Activated CD4-positive, alpha-beta T cell treated with anti-CD3 and anti-CD28 coated beads, Interleukin-2, amount 10 ng/mL, durations not matched to agents 24 days and 14 days (primary cell): ENCODE measurements at regions of chr3 and their contacts with region 1.

Region 1: GRCh38 chr3:157159762-157160657 is at the start of gene CCNL1:
- DNase-seq: peak; percentile 99
- H3K4me3 Mint-ChIP-seq: peak within 1 kb of the TSS; percentile 94
- H3K27ac Mint-ChIP-seq: peak within 1 kb of the TSS; percentile 99
- H3K4me1 Mint-ChIP-seq: peaks cover 44% of the 10 kb centered on the region
- H3K27me3 Mint-ChIP-seq: no peaks in the 10 kb centered on the region
- total RNA-seq, gene CCNL1: 171 and 172 TPM in 2 replicates

Region 2: GRCh38 chr3:155854141-155854940 is 1305.7 kb before region 1 on chr3 and contains the start of gene SLC33A1:
- intact Hi-C with region 1: loop called (anchors 5 kb)
- DNase-seq: peak; percentile 99
- H3K4me3 Mint-ChIP-seq: peak within 1 kb of the TSS; percentile 97
- H3K27ac Mint-ChIP-seq: peak within 1 kb of the TSS; percentile 98
- H3K4me1 Mint-ChIP-seq: peaks cover 31% of the 10 kb centered on the region
- H3K27me3 Mint-ChIP-seq: peaks cover 2% of the 10 kb centered on the region
- total RNA-seq, gene SLC33A1: 27.4 and 28.0 TPM in 2 replicates

Region 3: DNA sequence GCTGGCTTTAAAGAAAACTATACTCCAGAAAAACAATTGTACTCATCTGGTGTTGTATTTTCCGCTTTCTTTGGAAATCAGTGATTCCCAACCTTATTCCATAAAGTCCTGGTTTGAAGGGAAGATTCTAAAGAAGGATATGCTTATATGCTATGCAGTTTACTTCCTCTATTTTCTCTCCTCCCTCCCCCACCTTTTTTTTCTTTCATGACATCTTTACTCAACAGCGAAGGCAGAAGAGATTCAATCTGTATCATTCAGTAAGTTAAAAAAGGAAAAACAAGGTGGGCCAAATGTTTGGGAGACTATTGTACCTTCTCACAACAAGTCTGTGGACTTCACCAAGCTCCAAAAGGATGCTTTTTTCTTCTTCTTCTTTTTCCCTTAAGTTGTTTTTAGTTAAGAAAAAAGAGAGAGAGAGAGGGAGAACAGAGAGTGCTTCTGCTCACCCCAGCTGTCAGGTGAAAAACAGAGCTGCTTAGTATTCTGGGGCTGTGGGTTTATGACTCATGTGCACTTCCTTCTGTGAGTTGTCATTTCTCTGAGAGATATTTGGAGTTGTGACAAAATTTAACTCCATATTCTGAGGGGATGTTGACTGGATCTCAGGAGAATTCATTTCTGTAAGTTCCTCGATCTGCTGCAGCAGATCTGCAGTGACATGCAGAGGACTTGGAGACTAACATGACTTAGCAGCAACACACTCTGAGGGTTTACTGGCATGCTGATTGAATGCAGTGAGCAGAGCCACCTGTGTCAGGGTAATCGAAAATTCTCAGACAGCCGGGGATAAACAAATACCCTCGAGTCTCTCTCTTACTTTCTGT is 675.8 kb before region 1 on chr3:
- intact Hi-C with region 1: loop called (anchors 5 kb)
- DNase-seq: peak; percentile 87
- H3K4me3 Mint-ChIP-seq: peak overlapping the region; percentile 81
- H3K27ac Mint-ChIP-seq: peak overlapping the region; percentile 87
- H3K4me1 Mint-ChIP-seq: peaks cover 32% of the 10 kb centered on the region
- H3K27me3 Mint-ChIP-seq: peaks cover 8% of the 10 kb centered on the region

Region 4: DNA sequence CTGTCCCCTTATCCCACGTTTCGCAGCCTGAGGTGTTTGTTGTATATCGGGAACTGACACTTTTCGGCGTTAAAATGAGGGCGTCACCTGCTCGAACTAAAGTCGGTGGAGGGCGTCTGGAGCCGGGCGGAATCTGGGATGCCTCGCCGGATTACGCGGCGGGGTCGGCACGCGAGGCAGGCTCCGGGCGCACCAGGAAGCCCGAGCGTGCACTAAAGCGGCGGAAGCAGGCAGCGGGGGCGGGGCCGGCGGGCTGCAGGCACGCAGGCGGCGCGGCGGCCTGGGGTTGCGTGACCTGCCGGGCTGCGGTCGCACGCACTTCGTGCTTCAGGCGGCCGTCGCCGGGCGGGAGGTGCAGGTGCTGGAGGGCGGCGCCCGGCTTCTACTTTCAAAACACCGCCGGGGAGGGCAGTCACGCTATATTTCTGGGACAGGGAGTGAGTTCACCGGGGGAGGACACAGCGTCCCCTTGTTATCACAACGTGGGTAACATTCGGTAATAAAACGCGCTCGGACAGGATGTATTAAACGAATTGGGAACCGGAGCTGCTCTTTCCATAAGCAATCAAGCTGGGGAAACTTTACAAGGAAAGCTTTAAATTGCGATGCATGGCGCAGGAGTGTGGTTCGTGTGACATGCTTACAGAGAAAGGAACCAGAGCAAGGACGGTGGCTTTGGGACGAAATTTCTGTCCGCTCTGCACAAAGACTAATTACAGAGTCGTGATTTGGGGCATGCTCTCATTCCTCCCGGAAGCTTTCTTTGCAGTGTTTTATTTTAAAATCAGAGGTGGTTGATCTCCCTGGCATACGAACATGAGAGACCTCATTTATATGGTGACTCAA is 343.0 kb before region 1 on chr3:
- intact Hi-C with region 1: loop called (anchors 1 kb)
- DNase-seq: peak; percentile 97
- H3K4me3 Mint-ChIP-seq: peak overlapping the region; percentile 92
- H3K27ac Mint-ChIP-seq: peak overlapping the region; percentile 98
- H3K4me1 Mint-ChIP-seq: peaks cover 52% of the 10 kb centered on the region
- H3K27me3 Mint-ChIP-seq: no peaks in the 10 kb centered on the region

Region 5: DNA sequence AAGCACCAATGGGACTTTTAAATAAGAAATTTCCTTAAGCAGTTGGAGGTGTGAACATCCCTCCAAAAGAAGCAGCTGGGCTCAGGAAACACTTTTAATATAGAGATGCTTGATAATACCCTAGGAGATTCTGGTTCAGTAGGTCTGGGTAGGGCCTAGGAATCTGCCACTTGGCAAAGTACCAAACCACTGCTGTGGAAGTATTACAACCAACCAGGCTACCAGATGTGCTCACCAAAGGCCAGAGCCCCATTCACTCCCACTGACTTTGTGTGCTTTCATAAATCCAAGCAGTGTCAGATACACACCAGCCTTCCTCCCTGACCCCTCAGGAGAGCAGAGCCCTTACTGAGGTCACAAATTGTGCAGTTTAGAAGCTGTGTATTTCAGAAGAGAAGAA is 162.7 kb before region 1 on chr3:
- intact Hi-C with region 1: no loop called
- DNase-seq: no peak
- H3K4me3 Mint-ChIP-seq: no peak overlapping the region
- H3K27ac Mint-ChIP-seq: no peak overlapping the region
- H3K4me1 Mint-ChIP-seq: no peaks in the 10 kb centered on the region
- H3K27me3 Mint-ChIP-seq: peaks cover 35% of the 10 kb centered on the region

Region 6: DNA sequence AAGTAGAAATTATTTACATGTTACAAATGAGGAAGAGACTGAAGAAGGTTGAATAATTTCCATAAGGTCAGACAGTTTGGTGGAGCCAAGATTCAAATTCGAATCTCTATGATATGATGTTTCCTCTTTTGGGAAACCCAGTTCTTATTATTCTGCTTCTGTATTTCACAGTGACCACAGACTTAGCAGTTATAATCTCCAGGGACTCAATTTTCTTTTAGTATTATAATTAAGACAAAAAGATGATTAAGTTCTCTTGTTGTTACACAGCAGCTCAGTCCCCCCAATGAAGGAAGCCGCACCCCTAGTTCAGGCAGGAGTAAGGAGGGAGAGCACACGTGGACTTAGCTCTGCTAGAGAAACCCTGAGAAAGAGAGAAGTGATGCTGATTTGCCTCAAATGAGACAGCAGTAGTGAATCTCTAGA is 130.6 kb before region 1 on chr3:
- intact Hi-C with region 1: no loop called
- DNase-seq: no peak
- H3K4me3 Mint-ChIP-seq: no peak overlapping the region
- H3K27ac Mint-ChIP-seq: no peak overlapping the region
- H3K4me1 Mint-ChIP-seq: no peaks in the 10 kb centered on the region
- H3K27me3 Mint-ChIP-seq: peaks cover 29% of the 10 kb centered on the region

Region 7: GRCh38 chr3:157045238-157045850 is 114.7 kb before region 1 on chr3:
- intact Hi-C with region 1: no loop called
- DNase-seq: no peak
- H3K4me3 Mint-ChIP-seq: no peak overlapping the region
- H3K27ac Mint-ChIP-seq: no peak overlapping the region
- H3K4me1 Mint-ChIP-seq: no peaks in the 10 kb centered on the region
- H3K27me3 Mint-ChIP-seq: peaks cover 40% of the 10 kb centered on the region

Region 8: DNA sequence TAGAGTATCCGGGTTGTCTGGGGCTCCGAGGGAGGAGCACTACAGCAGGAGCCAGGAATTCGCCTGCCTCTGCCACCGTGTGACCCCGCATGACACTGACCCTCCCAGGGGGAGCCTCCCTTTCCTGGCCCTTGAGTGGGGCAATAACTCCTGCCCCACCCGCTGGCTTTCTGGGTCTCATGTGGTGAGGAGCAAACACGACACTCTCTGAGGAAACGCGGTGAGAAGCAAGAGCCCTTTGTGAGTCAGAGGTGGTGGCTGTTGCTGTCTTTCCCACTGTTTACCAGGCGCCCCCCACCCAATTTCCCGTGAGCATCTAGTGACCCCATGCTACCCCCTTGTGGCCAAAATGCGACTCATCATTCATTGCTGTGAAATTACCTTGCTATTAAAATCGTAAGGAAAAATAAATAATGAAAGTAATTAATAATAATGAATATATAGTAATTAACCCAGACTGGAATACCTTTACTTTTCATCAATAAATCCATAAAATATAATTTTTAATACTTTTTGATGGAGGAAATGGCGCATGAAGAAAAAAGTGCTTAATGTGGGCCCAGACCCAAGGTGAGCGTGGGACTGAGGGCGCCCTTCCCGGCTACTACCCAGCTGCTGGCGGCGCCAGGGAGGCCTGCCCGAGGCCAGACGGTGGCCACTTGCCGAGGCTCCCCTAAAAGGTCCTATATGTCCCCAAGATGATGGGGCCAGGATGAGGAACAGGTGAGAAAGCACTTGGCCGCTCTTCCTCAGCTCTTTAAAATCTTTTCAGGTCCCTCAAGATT is 29.4 kb before region 1 on chr3:
- intact Hi-C with region 1: loop called (anchors 2 kb)
- DNase-seq: peak; percentile 91
- H3K4me3 Mint-ChIP-seq: peak overlapping the region; percentile 78
- H3K27ac Mint-ChIP-seq: peak overlapping the region; percentile 98
- H3K4me1 Mint-ChIP-seq: peaks cover 82% of the 10 kb centered on the region
- H3K27me3 Mint-ChIP-seq: no peaks in the 10 kb centered on the region

Region 9: GRCh38 chr3:157174649-157175498 is 14.9 kb after region 1 on chr3:
- intact Hi-C with region 1: loop called (anchors 1 kb)
- DNase-seq: peak; percentile 99
- H3K4me3 Mint-ChIP-seq: peak overlapping the region; percentile 89
- H3K27ac Mint-ChIP-seq: peak overlapping the region; percentile 99
- H3K4me1 Mint-ChIP-seq: peaks cover 25% of the 10 kb centered on the region
- H3K27me3 Mint-ChIP-seq: peaks cover 2% of the 10 kb centered on the region